Sciatic nerve (tissue), 2 donors: ENCODE measurements at regions of chr9 and their contacts with region 1.

Region 1: GRCh38 chr9:129682390-129682789 is 16.9 kb downstream of the PRRX2 start:
- DNase-seq: no peak
- ATAC-seq: no peak

Region 2: GRCh38 chr9:128072144-128073021 is 1610.0 kb before region 1 on chr9:
- intact Hi-C with region 1: loop called (anchors 5 kb)
- DNase-seq: peak; percentile 94
- ATAC-seq: peak; percentile 44